ENCODE measurements at regions of chr15 and their contacts with region 1.

Region 1: GRCh38 chr15:64233299-64233698 is 70.5 kb upstream of the PPIB start:
- DNase-seq: no peak
- ATAC-seq: no peak
- H3K4me3 ChIP-seq: no peak overlapping the region
- H3K27ac ChIP-seq: no peak overlapping the region
- H3K4me1 ChIP-seq: peaks cover 12% of the 10 kb centered on the region
- H3K27me3 ChIP-seq: no peaks in the 10 kb centered on the region
- CTCF ChIP-seq: no peak

Region 2: DNA sequence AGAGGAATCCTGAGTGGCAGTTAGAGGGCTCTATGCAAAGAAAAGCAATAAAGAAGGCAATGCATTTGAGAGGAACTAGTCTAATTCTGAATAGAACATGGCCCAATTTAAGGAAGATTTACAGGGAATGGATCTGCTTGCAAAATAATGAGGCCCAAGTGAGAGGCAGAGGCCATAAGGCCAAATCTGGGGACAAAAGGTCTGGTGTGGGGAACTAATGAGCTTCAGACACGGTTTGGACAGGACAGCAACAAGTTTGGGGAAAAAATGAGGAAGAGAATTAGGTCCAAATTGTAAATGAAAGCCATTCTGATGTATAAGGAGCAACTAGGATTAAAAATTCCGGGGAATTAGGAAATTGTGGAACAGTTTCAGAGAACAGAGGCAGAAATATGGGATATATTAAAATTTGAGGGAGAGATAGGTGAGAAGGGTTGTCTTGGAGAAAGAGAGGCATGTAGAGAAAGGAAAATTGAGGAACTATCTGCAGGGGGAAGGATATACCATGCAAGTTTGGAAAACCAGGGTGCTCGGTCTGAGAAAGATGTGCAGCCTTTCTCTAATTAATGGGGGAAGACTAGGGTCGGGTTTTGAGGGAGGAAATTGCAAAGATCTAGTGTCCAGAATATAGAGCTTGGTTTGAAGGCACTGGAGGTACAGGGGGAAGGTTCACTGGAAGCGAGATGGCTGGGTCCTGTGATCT is 468.3 kb after region 1 on chr15:
- CTCF ChIA-PET with region 1: interaction called, 16 read pairs
- POLR2A ChIA-PET with region 1: no interaction called
- intact Hi-C with region 1: no loop called
- DNase-seq: no peak
- ATAC-seq: no peak
- H3K4me3 ChIP-seq: peak overlapping the region; percentile 93
- H3K27ac ChIP-seq: no peak overlapping the region
- H3K4me1 ChIP-seq: peaks cover 39% of the 10 kb centered on the region
- H3K27me3 ChIP-seq: no peaks in the 10 kb centered on the region
- CTCF ChIP-seq: no peak

Region 3: DNA sequence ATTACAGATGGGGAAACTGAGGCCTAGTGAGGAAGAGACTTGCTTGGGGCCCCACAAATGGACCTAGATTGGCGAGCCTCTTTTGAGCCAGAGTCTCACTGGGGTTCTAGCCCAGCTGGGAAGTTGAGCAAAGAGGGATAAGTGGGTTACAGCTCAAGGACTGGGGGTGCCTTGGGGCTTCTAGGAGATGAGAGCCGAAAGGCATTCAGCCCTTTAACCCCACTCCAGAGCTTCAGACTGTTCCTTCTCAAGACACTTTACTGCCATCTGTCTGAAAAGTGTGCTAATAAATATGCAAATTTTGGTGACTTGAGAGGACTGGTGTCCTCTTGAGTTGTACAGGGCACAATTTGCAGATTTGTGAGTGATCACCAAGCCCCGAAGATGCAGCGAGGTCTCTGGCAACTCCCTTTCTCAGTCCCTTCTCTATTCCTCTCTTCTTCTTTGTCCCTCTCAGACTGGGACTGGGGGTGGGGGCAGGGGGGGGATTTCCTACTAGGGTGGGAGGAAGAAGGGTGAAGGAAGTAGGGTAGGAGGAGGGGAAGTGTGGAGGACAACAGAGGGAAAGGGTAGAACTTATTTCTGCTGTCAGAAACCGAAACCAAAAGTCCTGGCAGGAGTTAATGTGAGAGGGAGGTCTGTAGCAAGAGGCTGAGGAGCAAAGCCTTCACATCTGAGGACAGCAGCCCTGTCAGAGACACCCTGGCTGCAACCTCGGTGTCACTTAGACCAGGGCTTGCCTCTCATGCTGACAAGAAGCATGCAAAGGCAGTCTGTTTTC is 662.2 kb after region 1 on chr15:
- CTCF ChIA-PET with region 1: no interaction called
- POLR2A ChIA-PET with region 1: no interaction called
- intact Hi-C with region 1: no loop called
- DNase-seq: no peak
- ATAC-seq: no peak
- H3K4me3 ChIP-seq: no peak overlapping the region
- H3K27ac ChIP-seq: no peak overlapping the region
- H3K4me1 ChIP-seq: peaks cover 16% of the 10 kb centered on the region
- H3K27me3 ChIP-seq: no peaks in the 10 kb centered on the region
- CTCF ChIP-seq: no peak